ENCODE measurements at regions of chr4 and their contacts with region 1.

Region 1: GRCh38 chr4:83012687-83013419 is 2.2 kb upstream of the LIN54 start:
- DNase-seq: peak; percentile 88
- ATAC-seq: peak; percentile 85
- H3K4me3 ChIP-seq: peak overlapping the region; percentile 77
- H3K27ac ChIP-seq: peak overlapping the region; percentile 60
- H3K4me1 ChIP-seq: no peaks in the 10 kb centered on the region
- H3K27me3 ChIP-seq: no peaks in the 10 kb centered on the region
- CTCF ChIP-seq: peak; percentile 41 to 47 (median 45); a peak in 5 of 6 replicates
- EP300 ChIP-seq: no peak
- POLR2A ChIP-seq: peak; percentile 78
- RAD21 ChIP-seq: peak; percentile 59

Region 2: GRCh38 chr4:82428969-82429727 is 583.7 kb before region 1 on chr4:
- CTCF ChIA-PET with region 1: no interaction called
- POLR2A ChIA-PET with region 1: no interaction called
- RAD21 ChIA-PET with region 1: no interaction called
- SMC1A ChIA-PET with region 1: no interaction called
- in situ Hi-C with region 1: no loop called
- intact Hi-C with region 1: loop called (anchors 10 kb)
- DNase-seq: peak; percentile 52
- ATAC-seq: peak; percentile 72
- H3K4me3 ChIP-seq: peak overlapping the region; percentile 97
- H3K27ac ChIP-seq: peak overlapping the region; percentile 98
- H3K4me1 ChIP-seq: peaks cover 3% of the 10 kb centered on the region; the same call in 1 of the 2 replicates
- H3K27me3 ChIP-seq: no peaks in the 10 kb centered on the region
- CTCF ChIP-seq: peak; percentile 75 to 97 (median 96); a peak in 4 of 6 replicates
- EP300 ChIP-seq: peak in 1 of 2 experiments; percentile 46; a peak in 1 of 4 replicates
- POLR2A ChIP-seq: peak; percentile 94
- RAD21 ChIP-seq: 0 out of 2 replicates have a peak, but pooled peaks have one; percentile 8

Region 3: GRCh38 chr4:82890901-82891706 is 121.7 kb before region 1 on chr4 and contains the start of gene SEC31A:
- CTCF ChIA-PET with region 1: interaction called, 3 read pairs
- POLR2A ChIA-PET with region 1: interaction called, 9 read pairs
- RAD21 ChIA-PET with region 1: interaction called, 5 read pairs
- SMC1A ChIA-PET with region 1: interaction called, 15 read pairs
- in situ Hi-C with region 1: loop called (anchors 5 kb)
- intact Hi-C with region 1: loop called (anchors 1 kb)
- DNase-seq: peak; percentile 84
- ATAC-seq: peak; percentile 90
- H3K4me3 ChIP-seq: peak within 1 kb of the TSS; percentile 90
- H3K27ac ChIP-seq: peak within 1 kb of the TSS; percentile 94
- H3K4me1 ChIP-seq: peaks cover 3% of the 10 kb centered on the region; the same call in 1 of the 2 replicates
- H3K27me3 ChIP-seq: no peaks in the 10 kb centered on the region
- CTCF ChIP-seq: 0 out of 6 replicates have a peak, but pooled peaks of 1 of the 3 experiments have one; percentile 15
- EP300 ChIP-seq: peak in 1 of 2 experiments; percentile 31; a peak in 1 of 4 replicates
- POLR2A ChIP-seq: peak; percentile 99
- RAD21 ChIP-seq: no peak
- polyA plus RNA-seq, gene SEC31A: 74.6 to 80.8 TPM

Region 4: DNA sequence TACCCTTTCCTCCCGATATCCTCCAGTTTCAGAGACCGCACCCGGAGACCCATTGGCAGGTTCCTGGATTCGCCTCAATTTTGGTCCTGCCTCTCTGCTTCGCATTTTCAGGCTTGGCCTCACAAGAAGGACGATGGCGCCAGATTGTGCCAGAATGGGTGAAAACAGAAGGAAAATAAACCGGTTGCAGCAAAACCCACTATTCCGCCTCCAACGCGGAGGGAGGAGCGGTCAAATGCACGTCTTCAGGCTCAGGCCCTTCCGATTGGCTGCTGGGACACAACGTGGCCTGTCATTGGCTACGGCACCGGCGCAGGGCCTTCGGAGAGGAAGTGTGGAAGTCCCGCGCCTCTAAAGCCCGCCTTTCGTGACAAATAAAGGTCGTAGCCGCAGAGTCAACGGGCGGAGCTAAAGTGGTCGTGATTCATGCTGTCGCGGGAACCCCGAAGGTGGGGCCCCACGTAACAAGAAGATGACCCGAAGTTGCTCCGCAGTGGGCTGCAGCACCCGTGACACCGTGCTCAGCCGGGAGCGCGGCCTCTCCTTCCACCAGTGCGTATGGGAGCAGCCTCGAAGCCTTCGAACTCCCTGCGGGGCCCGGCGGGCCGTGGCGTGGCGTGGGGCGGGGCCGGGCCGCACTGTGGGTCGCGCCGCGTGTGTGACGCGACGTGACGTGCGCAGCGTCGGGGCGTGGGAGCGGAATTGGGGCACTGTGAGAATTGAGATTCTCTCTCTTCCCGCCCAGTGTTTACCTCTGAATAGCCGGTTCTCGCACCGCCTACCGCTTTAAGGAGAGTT is 112.3 kb before region 1 on chr4 and contains the start of gene THAP9:
- CTCF ChIA-PET with region 1: interaction called, 27 read pairs
- POLR2A ChIA-PET with region 1: interaction called, 20 read pairs
- RAD21 ChIA-PET with region 1: interaction called, 38 read pairs
- SMC1A ChIA-PET with region 1: interaction called, 21 read pairs
- in situ Hi-C with region 1: no loop called
- intact Hi-C with region 1: loop called (anchors 2 kb)
- DNase-seq: peak; percentile 96
- ATAC-seq: peak; percentile 92
- H3K4me3 ChIP-seq: peak within 1 kb of the TSS; percentile 86
- H3K27ac ChIP-seq: peak within 1 kb of the TSS; percentile 95
- H3K4me1 ChIP-seq: peaks cover 7% of the 10 kb centered on the region
- H3K27me3 ChIP-seq: no peaks in the 10 kb centered on the region
- CTCF ChIP-seq: no peak
- EP300 ChIP-seq: no peak; a peak in 1 of 4 replicates
- POLR2A ChIP-seq: peak; percentile 93
- RAD21 ChIP-seq: no peak
- polyA plus RNA-seq, gene THAP9: 2.4 to 2.5 TPM

Region 5: DNA sequence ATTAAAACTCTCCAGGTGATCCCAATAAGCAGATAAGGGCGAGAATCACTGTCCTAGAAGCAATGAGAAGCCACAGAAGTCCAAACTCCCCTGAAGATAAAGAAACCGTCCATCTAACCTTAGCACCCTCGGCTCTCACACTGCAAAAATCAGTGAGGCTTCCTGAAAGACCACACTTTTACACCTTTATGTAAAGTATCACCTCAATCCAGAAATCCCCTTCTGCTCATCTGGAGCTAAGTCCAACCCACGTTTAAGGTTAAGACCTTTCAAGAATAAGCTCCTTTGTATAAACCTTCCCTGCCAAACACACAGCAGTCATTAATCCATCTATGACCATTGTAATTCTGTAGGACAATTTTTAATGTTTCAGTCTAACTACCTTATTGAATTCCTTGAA is 43.9 kb before region 1 on chr4:
- CTCF ChIA-PET with region 1: no interaction called
- POLR2A ChIA-PET with region 1: interaction called, 5 read pairs
- RAD21 ChIA-PET with region 1: no interaction called
- SMC1A ChIA-PET with region 1: interaction called, 11 read pairs
- in situ Hi-C with region 1: no loop called
- intact Hi-C with region 1: no loop called
- DNase-seq: no peak
- ATAC-seq: peak; percentile 86
- H3K4me3 ChIP-seq: peak overlapping the region; percentile 14; the same call in 1 of the 2 replicates
- H3K27ac ChIP-seq: peak overlapping the region; percentile 42
- H3K4me1 ChIP-seq: peaks cover 13% of the 10 kb centered on the region
- H3K27me3 ChIP-seq: no peaks in the 10 kb centered on the region
- CTCF ChIP-seq: no peak
- EP300 ChIP-seq: no peak
- POLR2A ChIP-seq: no peak
- RAD21 ChIP-seq: no peak

Region 6: DNA sequence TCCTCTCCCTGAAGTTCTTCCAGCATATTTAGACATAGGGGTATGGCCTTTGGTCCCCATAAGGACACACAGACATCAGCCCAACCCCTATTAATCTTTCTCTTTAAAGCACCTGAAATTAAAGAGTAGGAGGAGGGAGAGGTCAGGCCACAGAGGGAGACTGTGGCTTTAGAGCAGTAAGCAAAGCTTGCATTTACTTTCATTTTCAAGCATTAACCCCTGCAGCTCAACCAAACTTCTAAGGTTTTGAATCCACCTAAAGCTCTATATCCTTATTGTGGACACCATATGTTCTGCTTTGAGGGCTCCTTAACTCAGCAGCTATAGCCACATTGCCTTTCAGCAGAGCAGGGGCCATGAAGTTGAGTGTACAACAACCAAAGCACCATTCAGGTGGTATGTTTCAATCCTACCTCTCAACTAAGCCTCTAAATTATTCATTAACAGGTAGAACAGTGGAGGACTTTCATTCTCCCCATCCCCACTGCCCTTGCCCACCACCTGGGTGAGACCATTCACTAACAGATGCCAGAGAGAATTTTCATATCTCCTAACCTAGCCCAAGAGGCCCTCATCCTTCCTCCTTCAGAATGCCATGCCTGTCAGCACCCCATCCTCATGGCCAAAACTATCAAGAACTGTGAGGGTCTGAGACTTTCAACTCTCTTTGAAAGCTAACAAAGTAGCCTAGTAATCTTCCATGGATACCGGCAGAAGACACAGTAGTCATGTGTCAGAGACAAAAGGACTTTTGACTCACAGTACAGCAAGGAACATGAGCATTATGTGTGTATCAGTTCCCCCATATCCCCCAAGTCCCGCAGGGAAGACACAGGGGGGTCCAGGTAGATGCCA is 23.1 kb before region 1 on chr4:
- CTCF ChIA-PET with region 1: interaction called, 3 read pairs
- POLR2A ChIA-PET with region 1: interaction called, 6 read pairs
- RAD21 ChIA-PET with region 1: interaction called, 6 read pairs
- SMC1A ChIA-PET with region 1: interaction called, 11 read pairs
- in situ Hi-C with region 1: no loop called
- intact Hi-C with region 1: loop called (anchors 2 kb)
- DNase-seq: peak; percentile 41
- ATAC-seq: peak; percentile 96
- H3K4me3 ChIP-seq: peak overlapping the region; percentile 34; the same call in 1 of the 2 replicates
- H3K27ac ChIP-seq: peak overlapping the region; percentile 35
- H3K4me1 ChIP-seq: peaks cover 5% of the 10 kb centered on the region; the same call in 1 of the 2 replicates
- H3K27me3 ChIP-seq: no peaks in the 10 kb centered on the region
- CTCF ChIP-seq: no peak
- EP300 ChIP-seq: 0 out of 4 replicates have a peak, but pooled peaks of 1 of the 2 experiments have one; percentile 17
- POLR2A ChIP-seq: no peak
- RAD21 ChIP-seq: 0 out of 2 replicates have a peak, but pooled peaks have one; percentile 1

Region 7: DNA sequence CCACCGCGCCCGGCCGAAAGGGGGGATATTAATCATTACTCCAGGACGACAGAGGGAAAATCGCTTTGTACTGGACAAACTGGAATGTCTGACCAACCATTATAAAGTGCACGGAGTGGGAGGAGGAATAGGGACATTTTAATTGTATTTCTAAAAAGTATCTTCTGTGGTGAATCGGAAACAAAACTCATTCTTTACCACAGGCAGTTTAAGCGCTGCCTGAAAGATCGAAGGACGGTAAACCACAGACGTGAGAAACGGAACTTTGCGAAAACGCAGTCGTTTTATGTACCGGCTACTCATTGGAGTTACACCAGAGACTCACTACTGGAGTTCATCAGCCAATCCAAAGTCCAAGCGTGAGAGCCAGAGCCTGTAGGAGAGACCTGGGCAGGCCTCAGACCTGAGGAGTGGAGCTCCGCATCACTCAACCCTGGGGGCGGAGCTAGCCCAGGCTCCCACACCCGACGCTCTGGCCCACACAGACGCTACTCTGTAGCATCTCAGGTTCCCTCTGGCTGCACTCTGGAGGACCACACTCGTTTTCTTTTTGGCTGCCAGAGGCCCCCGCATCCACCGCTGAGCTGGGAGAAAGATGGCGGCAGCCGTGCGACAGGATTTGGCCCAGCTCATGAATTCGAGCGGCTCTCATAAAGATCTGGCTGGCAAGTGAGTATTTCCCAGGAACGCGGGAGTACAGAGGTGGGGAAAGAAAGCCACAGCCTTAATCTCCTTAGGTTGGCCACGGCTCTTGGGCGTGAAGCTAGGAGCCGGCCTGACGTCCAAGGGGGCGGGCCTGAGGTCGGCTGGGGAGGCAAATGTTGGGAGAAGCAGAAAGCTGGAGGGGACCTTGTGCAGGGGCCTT is 22.0 kb after region 1 on chr4 and contains the start of gene COPS4:
- CTCF ChIA-PET with region 1: interaction called, 13 read pairs
- POLR2A ChIA-PET with region 1: interaction called, 27 read pairs
- RAD21 ChIA-PET with region 1: interaction called, 68 read pairs
- SMC1A ChIA-PET with region 1: interaction called, 33 read pairs
- in situ Hi-C with region 1: no loop called
- intact Hi-C with region 1: loop called (anchors 1 kb)
- DNase-seq: peak; percentile 100
- ATAC-seq: peak; percentile 96
- H3K4me3 ChIP-seq: peak within 1 kb of the TSS; percentile 78
- H3K27ac ChIP-seq: peak within 1 kb of the TSS; percentile 77
- H3K4me1 ChIP-seq: peaks cover 6% of the 10 kb centered on the region
- H3K27me3 ChIP-seq: no peaks in the 10 kb centered on the region
- CTCF ChIP-seq: peak in 1 of 3 experiments; percentile 17; a peak in 1 of 6 replicates
- EP300 ChIP-seq: peak; percentile 42 to 66; a peak in 3 of 4 replicates
- POLR2A ChIP-seq: peak; percentile 74
- RAD21 ChIP-seq: 0 out of 2 replicates have a peak, but pooled peaks have one; percentile 15
- polyA plus RNA-seq, gene COPS4: 112 to 159 TPM

Region 8: GRCh38 chr4:83138946-83139345 is 126.1 kb after region 1 on chr4:
- CTCF ChIA-PET with region 1: no interaction called
- POLR2A ChIA-PET with region 1: no interaction called
- RAD21 ChIA-PET with region 1: no interaction called
- SMC1A ChIA-PET with region 1: no interaction called
- in situ Hi-C with region 1: no loop called
- intact Hi-C with region 1: no loop called
- DNase-seq: no peak
- ATAC-seq: peak; percentile 40
- H3K4me3 ChIP-seq: no peak overlapping the region
- H3K27ac ChIP-seq: no peak overlapping the region; the same call in 1 of the 2 replicates
- H3K4me1 ChIP-seq: peaks cover 16% of the 10 kb centered on the region
- H3K27me3 ChIP-seq: no peaks in the 10 kb centered on the region
- CTCF ChIP-seq: no peak
- EP300 ChIP-seq: no peak
- POLR2A ChIP-seq: no peak
- RAD21 ChIP-seq: no peak

Region 9: DNA sequence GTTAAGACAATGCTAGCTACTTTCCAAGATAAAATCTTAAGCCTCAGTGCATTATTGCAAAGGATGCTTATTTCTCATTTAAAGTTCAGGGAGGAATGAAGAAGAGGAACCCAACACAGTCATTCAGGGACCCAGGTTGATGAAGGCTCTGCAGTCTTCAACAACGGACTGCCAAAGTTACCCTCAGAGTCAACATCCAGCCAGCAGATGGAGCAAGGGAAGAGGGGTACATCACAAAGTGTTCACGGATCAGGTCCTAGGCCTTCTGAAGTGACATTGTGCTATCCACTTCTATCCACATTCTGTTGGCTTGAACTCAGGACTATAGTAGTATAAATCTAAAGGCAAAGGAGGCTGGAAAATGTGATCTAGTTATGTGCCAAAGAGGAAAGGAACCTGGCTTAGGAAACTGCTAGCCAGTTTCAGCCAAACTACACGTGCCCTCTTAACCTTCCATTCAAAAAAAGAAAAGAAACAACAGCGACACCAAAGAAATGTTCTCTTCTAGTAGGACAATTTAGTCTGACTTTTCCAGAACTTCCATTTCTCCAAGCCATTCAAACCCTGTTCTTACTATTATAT is 1457.4 kb after region 1 on chr4:
- CTCF ChIA-PET with region 1: no interaction called
- POLR2A ChIA-PET with region 1: no interaction called
- RAD21 ChIA-PET with region 1: no interaction called
- SMC1A ChIA-PET with region 1: no interaction called
- in situ Hi-C with region 1: no loop called
- intact Hi-C with region 1: no loop called
- DNase-seq: no peak
- ATAC-seq: peak; percentile 45; the same call in 1 of the 3 replicates
- H3K4me3 ChIP-seq: no peak overlapping the region
- H3K27ac ChIP-seq: no peak overlapping the region
- H3K4me1 ChIP-seq: no peaks in the 10 kb centered on the region
- H3K27me3 ChIP-seq: no peaks in the 10 kb centered on the region; a peak in 1 of 4 replicates
- CTCF ChIP-seq: peak; percentile 18 to 28 (median 19); a peak in 3 of 6 replicates
- EP300 ChIP-seq: no peak
- POLR2A ChIP-seq: no peak
- RAD21 ChIP-seq: no peak